Tibial artery (tissue), 4 donors: ENCODE measurements at regions of chr3 and their contacts with region 1.

Region 1: DNA sequence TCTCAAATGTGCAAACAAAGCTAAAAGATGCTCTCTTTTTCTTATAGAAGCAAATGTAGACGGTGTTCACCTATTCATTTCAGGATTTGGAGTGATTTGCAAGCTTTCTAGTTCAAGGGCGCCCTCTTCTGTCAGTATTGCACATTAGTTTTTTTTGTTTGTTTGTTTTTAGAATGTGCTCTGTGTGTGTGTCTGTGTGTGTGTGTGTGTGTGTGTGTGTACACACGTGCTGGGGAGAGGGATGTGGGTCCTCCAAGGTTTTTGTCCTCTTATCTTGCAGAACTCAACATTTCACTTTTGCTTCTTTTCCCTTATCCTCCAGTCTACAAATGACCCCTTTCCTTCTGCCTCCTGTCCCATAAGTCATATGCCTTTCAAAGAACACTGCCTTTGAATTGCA is 23.5 kb downstream of the DNAH1 start:
- DNase-seq: no peak
- H3K4me3 ChIP-seq: no peak overlapping the region
- H3K27ac ChIP-seq: no peak overlapping the region
- H3K4me1 ChIP-seq: peaks cover 0 to 3% (median 0%) of the 10 kb centered on the region in 4 donors
- H3K27me3 ChIP-seq: no peaks in the 10 kb centered on the region
- CTCF ChIP-seq: peak; percentile 61 to 79

Region 2: DNA sequence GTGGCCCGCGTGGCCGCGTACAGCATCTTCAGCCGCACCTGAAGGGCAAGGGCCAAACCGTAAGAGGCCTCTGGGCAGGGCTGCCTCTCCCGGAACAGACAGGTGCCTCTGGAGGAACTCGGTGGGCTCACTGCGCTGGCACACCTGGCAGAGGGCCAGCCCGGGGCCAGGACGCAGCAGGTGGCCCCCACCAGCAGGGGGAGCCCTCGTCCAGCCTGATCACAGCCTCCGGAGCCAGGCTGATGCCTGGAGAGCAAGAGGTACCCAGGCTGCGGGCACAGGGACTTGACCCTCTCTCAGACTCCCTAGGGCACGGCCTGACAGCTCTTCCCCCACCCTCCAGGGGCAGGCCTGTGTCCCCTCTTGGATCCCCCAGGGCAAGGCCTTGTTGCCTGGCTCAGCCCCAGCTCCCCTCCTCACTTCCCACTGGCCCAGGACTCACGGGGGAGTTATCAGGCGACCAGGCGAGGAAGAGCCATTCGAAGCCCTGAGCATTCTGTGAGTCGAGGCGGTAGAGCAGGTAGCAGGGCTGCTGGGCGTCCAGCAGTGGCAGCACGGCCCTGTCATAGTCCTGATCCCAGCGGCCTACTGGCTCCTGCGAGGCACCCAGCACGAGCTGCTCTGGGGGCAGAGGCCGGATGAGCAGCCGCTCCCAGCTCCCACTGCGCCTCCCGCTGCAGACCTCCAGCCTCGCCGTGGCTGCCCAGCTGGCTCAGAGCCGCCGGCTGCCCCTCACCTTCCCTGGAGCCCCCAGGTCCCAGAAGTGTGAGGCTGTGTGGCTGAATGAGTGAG is 107.9 kb before region 1 on chr3:
- intact Hi-C with region 1: loop called (anchors 5 kb)
- DNase-seq: peak in 1 of 2 donors; percentile 52
- H3K4me3 ChIP-seq: no peak overlapping the region
- H3K27ac ChIP-seq: no peak overlapping the region
- H3K4me1 ChIP-seq: peaks cover 0 to 27% (median 16%) of the 10 kb centered on the region in 4 donors
- H3K27me3 ChIP-seq: no peaks in the 10 kb centered on the region
- CTCF ChIP-seq: peak; percentile 74 to 75

Region 3: DNA sequence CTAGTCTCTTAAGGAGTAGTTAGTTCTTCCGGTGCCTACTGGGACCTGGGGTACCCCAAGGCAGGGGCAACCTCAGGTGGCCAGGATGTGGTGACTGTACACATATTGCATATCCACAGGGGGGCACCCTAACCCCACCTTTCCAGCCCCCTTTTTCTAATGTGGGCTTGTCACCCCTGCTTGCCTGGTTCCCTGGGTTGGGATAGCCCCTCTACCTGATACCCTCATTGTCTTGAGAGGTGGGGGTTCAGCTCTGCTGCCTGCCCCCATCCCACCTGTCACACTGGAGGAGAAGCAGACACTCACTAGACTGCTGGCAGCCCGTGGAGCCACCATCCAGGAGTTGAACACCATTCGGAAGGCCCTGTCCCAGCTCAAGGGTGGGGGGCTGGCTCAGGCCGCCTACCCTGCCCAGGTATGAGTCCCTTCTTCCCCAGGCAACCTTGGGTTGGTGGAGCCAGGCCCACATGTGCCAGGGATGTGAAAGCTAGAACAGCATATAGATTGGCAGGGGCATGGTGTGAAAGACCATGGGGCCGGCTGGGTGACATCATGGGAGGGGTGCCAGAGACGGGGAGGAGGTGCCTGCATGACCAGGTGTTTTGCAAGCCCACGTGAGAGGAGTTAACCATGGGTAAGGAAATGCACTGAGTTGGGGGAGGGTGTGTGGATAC is 48.0 kb before region 1 on chr3:
- intact Hi-C with region 1: loop called (anchors 5 kb)
- DNase-seq: no peak
- H3K4me3 ChIP-seq: no peak overlapping the region
- H3K27ac ChIP-seq: no peak overlapping the region
- H3K4me1 ChIP-seq: peaks cover 0 to 18% (median 9%) of the 10 kb centered on the region in 4 donors
- H3K27me3 ChIP-seq: no peaks in the 10 kb centered on the region
- CTCF ChIP-seq: peak; percentile 4 to 27